Testis (tissue), 5 donors: ENCODE measurements at regions of chr16 and their contacts with region 1.

Region 1: GRCh38 chr16:28481986-28482385 is 9.8 kb upstream of the NPIPB7 start:
- DNase-seq: no peak
- H3K4me3 ChIP-seq: no peak overlapping the region
- H3K27ac ChIP-seq: no peak overlapping the region
- H3K4me1 ChIP-seq: no peaks in the 10 kb centered on the region
- H3K27me3 ChIP-seq: no peaks in the 10 kb centered on the region
- CTCF ChIP-seq: no peak
- POLR2A ChIP-seq: no peak

Region 2: GRCh38 chr16:28623172-28623711 is 141.3 kb after region 1 on chr16:
- intact Hi-C with region 1: loop called (anchors 10 kb)
- DNase-seq: peak; percentile 53
- H3K4me3 ChIP-seq: peak overlapping the region; percentile 61 to 73
- H3K27ac ChIP-seq: peak overlapping the region; percentile 34 to 39
- H3K4me1 ChIP-seq: peaks cover 4% of the 10 kb centered on the region
- H3K27me3 ChIP-seq: no peaks in the 10 kb centered on the region
- CTCF ChIP-seq: no peak
- POLR2A ChIP-seq: no peak

Region 3: GRCh38 chr16:28910086-28911031 is 428.4 kb after region 1 on chr16:
- intact Hi-C with region 1: no loop called
- DNase-seq: no peak
- H3K4me3 ChIP-seq: no peak overlapping the region
- H3K27ac ChIP-seq: no peak overlapping the region
- H3K4me1 ChIP-seq: no peaks in the 10 kb centered on the region
- H3K27me3 ChIP-seq: no peaks in the 10 kb centered on the region
- CTCF ChIP-seq: no peak
- POLR2A ChIP-seq: no peak